ENCODE measurements at regions of chr12 and their contacts with region 1.

Region 1: GRCh38 chr12:26028953-26029735 is 70.7 kb downstream of the RASSF8 start:
- DNase-seq: peak in 1 of 2 donors; percentile 7
- ATAC-seq: no peak

Region 2: GRCh38 chr12:25436203-25437030 is 592.7 kb before region 1 on chr12:
- intact Hi-C with region 1: loop called (anchors 5 to 10 kb)
- DNase-seq: no peak
- ATAC-seq: peak; percentile 55

Region 3: GRCh38 chr12:25985296-25986175 is 43.6 kb before region 1 on chr12:
- intact Hi-C with region 1: no loop called
- DNase-seq: no peak
- ATAC-seq: no peak

Measured in left colon (tissue), 2 donors.